Transverse colon (tissue), 4 donors: ENCODE measurements at regions of chr18 and their contacts with region 1.

Region 1: DNA sequence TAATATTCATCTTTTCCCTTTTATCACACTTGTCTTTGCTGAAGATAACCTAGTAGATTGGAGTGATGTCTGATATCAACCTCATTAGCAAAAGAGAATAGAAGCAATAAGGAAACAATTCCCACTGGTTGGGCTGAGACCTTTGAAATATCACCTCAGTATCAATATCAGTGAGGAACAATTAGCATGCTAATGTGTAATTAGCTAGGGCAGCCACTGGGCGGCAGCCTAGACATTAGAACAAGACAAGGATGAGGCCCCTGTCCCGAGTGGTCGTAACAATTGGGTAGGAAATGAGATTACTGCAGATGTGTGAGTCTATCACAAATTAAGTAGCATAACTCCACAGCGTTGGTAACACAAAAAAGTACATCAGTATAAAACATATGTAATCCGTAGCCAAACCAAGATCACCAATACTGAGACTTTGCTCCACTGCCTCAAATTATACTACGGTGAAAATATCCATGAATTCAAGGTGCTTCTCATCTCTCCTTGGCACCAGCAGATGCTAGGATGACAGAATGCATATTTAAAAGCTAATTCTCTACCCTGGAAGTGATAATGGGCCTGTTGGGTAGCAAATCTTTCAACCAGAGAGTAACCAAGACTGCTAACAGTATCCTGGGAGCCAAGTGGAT is 99.1 kb downstream of the ALPK2 start:
- DNase-seq: peak; percentile 71
- H3K4me3 ChIP-seq: no peak overlapping the region
- H3K27ac ChIP-seq: no peak overlapping the region
- H3K4me1 ChIP-seq: peaks cover 12 to 38% (median 14%) of the 10 kb centered on the region in 4 donors
- H3K27me3 ChIP-seq: no peaks in the 10 kb centered on the region
- CTCF ChIP-seq: peak; percentile 75 to 88 (median 80)
- EP300 ChIP-seq: no peak
- POLR2A ChIP-seq: no peak

Region 2: GRCh38 chr18:58064406-58064998 is 465.3 kb before region 1 on chr18:
- in situ Hi-C with region 1: no loop called
- intact Hi-C with region 1: no loop called
- DNase-seq: no peak
- H3K4me3 ChIP-seq: no peak overlapping the region
- H3K27ac ChIP-seq: no peak overlapping the region
- H3K4me1 ChIP-seq: no peaks in the 10 kb centered on the region
- H3K27me3 ChIP-seq: no peaks in the 10 kb centered on the region
- CTCF ChIP-seq: no peak
- EP300 ChIP-seq: no peak
- POLR2A ChIP-seq: no peak

Region 3: DNA sequence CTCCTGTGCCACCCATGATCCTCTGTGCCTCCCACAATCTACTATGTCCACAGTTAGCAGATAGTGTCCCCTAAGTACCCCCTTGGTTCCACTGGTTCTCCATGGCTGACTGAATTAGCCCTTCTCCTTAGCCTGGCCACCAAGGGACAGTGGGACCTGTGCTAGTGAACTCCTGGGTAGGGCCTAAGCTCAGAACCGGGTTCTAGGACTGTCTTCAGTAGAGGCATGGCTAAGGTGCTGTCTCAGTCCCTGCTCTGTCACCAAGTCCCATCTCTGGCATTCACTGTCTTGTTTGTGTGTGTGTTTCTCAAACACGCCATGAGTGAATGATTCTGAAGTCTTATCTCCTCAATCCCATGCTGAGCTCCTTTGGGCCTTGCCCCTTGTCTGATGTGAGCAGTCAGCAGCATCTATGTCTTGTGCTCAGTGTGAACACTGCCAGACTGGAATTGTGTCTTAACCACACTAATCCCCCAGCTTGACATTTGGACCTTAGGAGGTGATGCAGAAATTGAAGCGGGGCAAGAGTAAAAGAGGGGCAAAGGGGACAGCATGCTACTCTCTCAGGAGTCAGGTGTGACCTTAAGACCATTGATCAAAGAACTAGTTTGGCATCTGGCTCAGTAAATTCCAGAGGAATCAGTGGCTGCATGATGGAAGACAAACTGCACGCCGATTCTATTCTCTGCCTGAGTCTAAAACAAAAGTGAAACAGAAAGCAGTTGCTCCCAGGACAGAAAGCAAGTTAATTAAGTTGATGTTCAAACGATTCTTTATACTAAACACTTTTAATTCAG is 91.5 kb before region 1 on chr18:
- in situ Hi-C with region 1: loop called in 1 of 4 experiments (anchors 25 kb)
- intact Hi-C with region 1: no loop called
- DNase-seq: no peak
- H3K4me3 ChIP-seq: peak overlapping the region in 3 of 4 donors; percentile 10 to 32 (median 12)
- H3K27ac ChIP-seq: no peak overlapping the region
- H3K4me1 ChIP-seq: peaks cover 0 to 9% (median 3%) of the 10 kb centered on the region in 4 donors
- H3K27me3 ChIP-seq: no peaks in the 10 kb centered on the region
- CTCF ChIP-seq: no peak
- EP300 ChIP-seq: no peak
- POLR2A ChIP-seq: no peak

Region 4: DNA sequence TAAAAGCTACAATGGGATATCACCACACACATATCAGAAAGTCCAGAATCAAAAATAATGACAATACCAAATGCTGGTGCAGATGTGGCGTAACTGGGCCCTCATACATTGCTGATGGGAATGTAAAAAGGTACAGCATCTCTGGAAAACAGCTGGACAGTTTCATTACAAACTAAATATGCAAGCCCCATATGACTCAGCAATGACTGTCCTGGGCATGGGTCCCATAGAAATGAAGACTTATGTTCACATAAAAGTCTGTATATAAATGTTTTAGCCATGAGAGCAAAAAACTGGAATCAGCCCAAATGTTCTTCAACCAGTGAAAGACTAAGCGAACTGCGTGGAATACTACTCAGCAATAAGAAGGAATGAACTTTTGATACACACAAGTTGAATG is 42.3 kb after region 1 on chr18:
- in situ Hi-C with region 1: no loop called
- intact Hi-C with region 1: no loop called
- DNase-seq: peak; percentile 20
- H3K4me3 ChIP-seq: no peak overlapping the region
- H3K27ac ChIP-seq: peak overlapping the region in 1 of 4 donors; percentile 50
- H3K4me1 ChIP-seq: peaks cover 0 to 5% (median 0%) of the 10 kb centered on the region in 4 donors
- H3K27me3 ChIP-seq: no peaks in the 10 kb centered on the region
- CTCF ChIP-seq: no peak
- EP300 ChIP-seq: no peak
- POLR2A ChIP-seq: no peak

Region 5: DNA sequence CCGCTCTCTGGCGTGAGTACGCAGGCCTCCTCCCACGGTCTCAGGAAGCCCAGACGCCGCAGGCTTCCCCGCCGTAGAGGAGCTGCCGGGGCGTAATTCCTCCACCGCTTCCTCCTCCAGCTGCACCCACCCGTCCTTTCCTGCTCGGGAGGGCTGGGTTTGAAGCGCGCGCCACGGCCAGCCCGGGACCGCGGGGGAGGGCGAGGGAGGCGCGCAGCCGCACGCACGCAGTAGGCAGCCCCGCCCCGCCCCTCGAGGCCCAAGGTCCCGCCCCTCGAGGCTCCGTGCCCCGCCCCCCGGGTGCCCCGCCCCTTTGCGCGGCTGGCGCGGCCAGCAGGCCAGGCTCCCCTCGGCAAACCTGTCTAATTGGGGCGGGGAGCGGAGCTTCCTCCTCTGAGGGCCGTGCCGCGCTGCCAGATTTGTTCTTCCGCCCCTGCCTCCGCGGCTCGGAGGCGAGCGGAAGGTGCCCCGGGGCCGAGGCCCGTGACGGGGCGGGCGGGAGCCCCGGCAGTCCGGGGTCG is 141.3 kb after region 1 on chr18 and contains the start of gene MALT1:
- in situ Hi-C with region 1: loop called in 2 of 4 experiments (anchors 10 to 25 kb)
- intact Hi-C with region 1: no loop called
- DNase-seq: peak; percentile 97
- H3K4me3 ChIP-seq: peak within 1 kb of the TSS; percentile 61 to 94 (median 84)
- H3K27ac ChIP-seq: peak within 1 kb of the TSS; percentile 96 to 99 (median 98)
- H3K4me1 ChIP-seq: peaks cover 0 to 28% (median 14%) of the 10 kb centered on the region in 4 donors
- H3K27me3 ChIP-seq: no peaks in the 10 kb centered on the region
- CTCF ChIP-seq: no peak
- EP300 ChIP-seq: no peak
- POLR2A ChIP-seq: peak; percentile 85
- total RNA-seq, gene MALT1: 12.5 to 38.9 (median 29.5) TPM

Region 6: GRCh38 chr18:58761241-58761969 is 231.6 kb after region 1 on chr18:
- in situ Hi-C with region 1: loop called (anchors 5 to 10 kb)
- intact Hi-C with region 1: loop called (anchors 2 kb)
- DNase-seq: no peak
- H3K4me3 ChIP-seq: no peak overlapping the region
- H3K27ac ChIP-seq: no peak overlapping the region
- H3K4me1 ChIP-seq: peaks cover 0 to 7% (median 4%) of the 10 kb centered on the region in 4 donors
- H3K27me3 ChIP-seq: peaks cover 15% of the 10 kb centered on the region
- CTCF ChIP-seq: no peak
- EP300 ChIP-seq: no peak
- POLR2A ChIP-seq: no peak

Region 7: DNA sequence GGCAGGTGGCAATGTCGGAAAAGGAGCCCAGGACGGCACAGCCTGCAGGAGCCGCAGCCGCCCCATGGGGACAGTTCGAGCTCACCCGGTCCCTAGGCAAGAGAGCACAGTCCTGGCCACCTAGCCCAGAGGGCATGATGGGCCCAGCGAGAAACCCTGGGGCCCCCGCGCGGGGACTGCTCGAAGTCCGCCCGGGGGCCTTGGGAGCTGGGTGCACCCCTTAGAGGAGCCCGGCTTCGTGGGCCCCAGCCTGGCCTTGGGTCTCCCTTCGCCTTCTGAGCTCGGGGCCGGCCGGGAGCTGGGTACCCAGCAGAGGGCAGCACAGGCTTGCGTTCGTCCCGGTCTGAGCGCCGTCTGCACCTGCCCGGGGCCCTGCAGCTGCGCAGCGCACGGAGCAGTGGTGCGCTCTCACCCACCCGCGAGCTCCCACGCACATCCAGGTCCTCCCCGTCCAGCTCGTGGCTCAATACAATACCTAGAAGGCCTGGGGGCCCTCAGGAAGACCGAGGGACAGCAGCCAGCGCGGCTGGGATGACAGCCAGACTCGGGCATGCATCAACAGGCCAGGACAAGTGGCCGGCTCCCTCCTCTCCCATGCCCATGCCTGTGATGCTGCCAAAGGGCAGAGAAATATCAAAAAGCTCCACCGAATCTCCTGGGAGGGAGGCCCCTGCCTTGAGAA is 238.6 kb after region 1 on chr18:
- in situ Hi-C with region 1: loop called (anchors 5 to 10 kb)
- intact Hi-C with region 1: loop called (anchors 2 kb)
- DNase-seq: peak; percentile 83
- H3K4me3 ChIP-seq: peak overlapping the region in 2 of 4 donors; percentile 16 to 40
- H3K27ac ChIP-seq: no peak overlapping the region
- H3K4me1 ChIP-seq: peaks cover 7 to 19% (median 12%) of the 10 kb centered on the region in 4 donors
- H3K27me3 ChIP-seq: peaks cover 23% of the 10 kb centered on the region
- CTCF ChIP-seq: peak; percentile 65 to 81 (median 77)
- EP300 ChIP-seq: no peak
- POLR2A ChIP-seq: no peak

Region 8: DNA sequence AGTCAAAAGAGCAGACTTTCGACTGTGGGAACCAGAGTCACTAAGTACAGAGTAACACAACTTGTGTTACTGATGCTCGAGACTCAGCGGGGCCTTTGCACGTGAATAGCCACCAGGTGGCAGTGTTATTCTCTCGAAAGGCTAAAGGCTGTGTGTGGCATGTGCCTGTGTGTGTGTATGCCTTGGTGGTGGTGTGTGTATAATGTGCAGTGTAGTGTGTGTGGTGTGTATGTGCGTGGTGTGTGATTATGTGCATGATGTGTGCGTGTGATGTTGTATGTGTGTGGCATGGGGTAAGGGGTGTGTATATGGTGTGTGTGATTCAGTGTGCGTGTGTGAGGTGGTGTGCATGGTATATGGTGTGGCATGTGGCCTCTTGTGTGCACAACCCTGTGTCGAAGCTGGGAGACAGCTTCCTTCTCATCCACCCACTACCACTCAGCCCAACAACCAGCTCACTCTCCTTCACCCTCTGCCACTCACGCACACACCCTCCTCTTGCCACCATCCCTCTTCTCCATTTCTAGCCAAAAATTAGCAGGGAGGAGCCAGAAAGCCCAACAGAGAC is 251.9 kb after region 1 on chr18:
- in situ Hi-C with region 1: no loop called
- intact Hi-C with region 1: no loop called
- DNase-seq: peak; percentile 80
- H3K4me3 ChIP-seq: no peak overlapping the region
- H3K27ac ChIP-seq: no peak overlapping the region
- H3K4me1 ChIP-seq: peaks cover 0 to 17% (median 11%) of the 10 kb centered on the region in 4 donors
- H3K27me3 ChIP-seq: no peaks in the 10 kb centered on the region
- CTCF ChIP-seq: peak; percentile 84 to 95 (median 87)
- EP300 ChIP-seq: no peak
- POLR2A ChIP-seq: no peak